ENCODE measurements at regions of chr5 and their contacts with region 1.

Region 1: GRCh38 chr5:84393969-84394368 is 9.3 kb upstream of the EDIL3 start:
- DNase-seq: peak in 1 of 2 donors; percentile 84
- H3K4me3 ChIP-seq: no peak overlapping the region
- H3K27ac ChIP-seq: peak overlapping the region; percentile 74 to 83
- H3K4me1 ChIP-seq: peaks cover 0 to 10% of the 10 kb centered on the region in 2 donors
- H3K27me3 ChIP-seq: no peaks in the 10 kb centered on the region
- CTCF ChIP-seq: peak in 1 of 3 experiments; percentile 37

Region 2: GRCh38 chr5:83827111-83827541 is 566.8 kb before region 1 on chr5:
- intact Hi-C with region 1: loop called (anchors 5 kb)
- DNase-seq: no peak
- H3K4me3 ChIP-seq: no peak overlapping the region
- H3K27ac ChIP-seq: no peak overlapping the region
- H3K4me1 ChIP-seq: no peaks in the 10 kb centered on the region
- H3K27me3 ChIP-seq: no peaks in the 10 kb centered on the region
- CTCF ChIP-seq: no peak

Region 3: GRCh38 chr5:84131372-84131771 is 262.6 kb before region 1 on chr5:
- intact Hi-C with region 1: no loop called
- DNase-seq: no peak
- H3K4me3 ChIP-seq: no peak overlapping the region
- H3K27ac ChIP-seq: no peak overlapping the region
- H3K4me1 ChIP-seq: no peaks in the 10 kb centered on the region
- H3K27me3 ChIP-seq: no peaks in the 10 kb centered on the region
- CTCF ChIP-seq: no peak